HepG2 (cell line): ENCODE measurements at regions of chr9 and their contacts with region 1.

Region 1: DNA sequence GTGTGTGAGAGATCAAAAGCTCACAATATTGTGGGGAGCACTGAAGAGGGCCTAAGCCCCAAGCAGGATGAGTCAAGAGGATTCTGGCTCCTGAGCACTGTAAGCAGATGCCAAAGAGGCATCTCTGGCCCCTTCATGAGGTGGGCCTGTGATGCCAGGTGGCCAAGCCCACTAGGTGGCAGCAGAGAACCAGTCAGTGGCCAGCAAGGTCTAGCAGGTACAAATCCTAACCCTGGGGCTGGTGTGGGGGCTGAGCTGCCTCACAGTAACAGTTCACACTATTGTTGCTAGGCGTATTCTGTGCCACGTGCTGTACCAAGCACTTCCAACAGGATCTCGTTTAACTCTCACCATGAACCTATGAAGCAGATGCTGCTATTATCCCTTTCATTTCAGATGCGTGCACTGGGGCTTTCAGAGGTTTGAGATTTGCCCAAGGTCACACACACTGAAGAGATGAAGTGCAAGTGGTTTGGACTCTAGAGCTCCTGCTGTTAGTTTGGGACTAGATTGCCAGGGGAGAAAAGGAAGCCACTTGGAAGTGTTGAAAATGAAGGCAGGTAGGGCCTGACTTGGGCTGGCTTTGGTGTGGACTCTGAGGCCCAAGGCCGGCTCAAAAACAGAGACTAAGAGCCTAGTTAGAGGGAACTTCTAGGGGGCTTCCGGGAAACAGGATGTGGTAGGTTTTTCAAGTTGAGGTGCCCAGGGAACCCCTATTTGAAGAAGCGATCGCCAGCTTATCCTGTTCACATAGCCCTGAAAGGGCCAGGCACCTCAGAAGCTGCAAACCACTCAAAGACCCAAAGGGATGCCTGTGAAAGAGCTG is 4.4 kb upstream of the MLANA start:
- DNase-seq: peak; percentile 78
- ATAC-seq: peak; percentile 98
- H3K4me3 ChIP-seq: no peak overlapping the region
- H3K27ac ChIP-seq: peak overlapping the region; percentile 37
- H3K4me1 ChIP-seq: peaks cover 54% of the 10 kb centered on the region
- H3K27me3 ChIP-seq: no peaks in the 10 kb centered on the region
- CTCF ChIP-seq: peak; percentile 99
- EP300 ChIP-seq: no peak; a peak in 1 of 4 replicates
- POLR2A ChIP-seq: no peak
- RAD21 ChIP-seq: peak; percentile 98

Region 2: DNA sequence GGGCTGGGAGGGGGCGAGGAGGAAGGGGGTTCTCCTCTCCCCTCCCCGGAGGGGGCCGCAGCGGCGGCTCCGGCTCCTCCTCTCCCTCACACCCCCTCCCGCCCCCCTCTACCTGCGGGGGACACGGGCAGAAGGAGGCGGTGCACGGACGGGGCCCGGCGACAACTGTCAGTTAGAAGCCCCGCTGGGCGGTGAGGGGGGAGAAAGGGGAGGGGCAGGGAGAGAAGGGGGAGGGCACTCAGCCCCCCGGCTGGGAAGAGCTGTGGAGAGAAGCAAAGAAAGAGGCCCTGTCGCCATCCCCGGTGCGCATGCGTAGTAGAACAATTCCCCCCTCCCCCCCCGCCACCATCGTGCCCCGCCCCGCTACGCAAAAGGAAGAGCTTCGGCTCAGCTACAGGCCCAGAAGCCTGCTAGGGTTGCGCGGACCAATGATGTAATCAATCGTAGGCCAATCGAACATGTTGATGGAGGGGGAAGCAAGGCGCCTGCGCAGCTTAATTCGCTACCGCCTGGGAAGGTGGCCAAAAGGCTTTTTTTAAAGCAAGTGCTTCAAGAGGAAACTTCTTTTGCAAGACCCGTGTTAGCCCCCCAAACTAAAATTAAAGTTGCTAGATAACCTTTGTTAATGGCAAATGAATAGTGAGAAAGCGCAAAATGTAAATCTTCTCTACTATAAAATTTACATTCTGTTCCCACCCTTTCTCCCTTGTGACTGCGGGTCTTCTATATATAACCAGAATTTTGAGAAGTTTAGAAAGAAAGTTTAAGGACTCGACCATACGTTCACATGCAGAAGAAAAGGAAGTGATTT is 122.0 kb after region 1 on chr9:
- CTCF ChIA-PET with region 1: no interaction called
- POLR2A ChIA-PET with region 1: interaction called, 3 read pairs
- in situ Hi-C with region 1: no loop called
- intact Hi-C with region 1: loop called (anchors 5 kb)
- DNase-seq: peak; percentile 98
- ATAC-seq: peak; percentile 65
- H3K4me3 ChIP-seq: peak overlapping the region; percentile 83 to 96 (median 85)
- H3K27ac ChIP-seq: peak overlapping the region; percentile 83
- H3K4me1 ChIP-seq: peaks cover 57% of the 10 kb centered on the region
- H3K27me3 ChIP-seq: no peaks in the 10 kb centered on the region; a peak in 1 of 5 replicates
- CTCF ChIP-seq: no peak
- EP300 ChIP-seq: no peak
- POLR2A ChIP-seq: peak; percentile 52 to 62; a peak in 3 of 4 replicates
- RAD21 ChIP-seq: no peak

Region 3: DNA sequence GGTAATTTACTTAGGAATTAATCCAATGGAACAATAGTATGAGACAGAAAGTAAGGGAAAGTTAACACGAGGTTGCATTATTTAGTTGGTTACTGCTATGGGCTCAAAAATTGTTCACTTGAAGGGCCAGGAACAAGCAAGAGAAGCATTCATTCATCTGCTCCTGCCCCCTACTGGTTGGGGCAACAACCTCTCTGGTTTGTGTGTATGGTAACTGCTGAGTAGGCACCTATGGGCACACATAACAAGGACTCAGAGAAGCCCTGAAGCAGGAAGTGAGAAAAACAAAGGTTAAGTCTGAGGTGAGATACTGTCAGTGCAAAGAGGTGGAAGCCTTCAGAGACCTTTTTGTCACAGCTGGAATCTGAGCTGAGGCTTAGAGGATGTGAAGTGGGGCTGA is 163.5 kb after region 1 on chr9:
- CTCF ChIA-PET with region 1: interaction called, 34 read pairs
- POLR2A ChIA-PET with region 1: no interaction called
- in situ Hi-C with region 1: loop called (anchors 5 kb)
- intact Hi-C with region 1: loop called (anchors 1 kb)
- DNase-seq: peak; percentile 30
- ATAC-seq: peak; percentile 40
- H3K4me3 ChIP-seq: no peak overlapping the region
- H3K27ac ChIP-seq: no peak overlapping the region
- H3K4me1 ChIP-seq: peaks cover 7% of the 10 kb centered on the region; the same call in 1 of the 2 replicates
- H3K27me3 ChIP-seq: 0 out of 5 replicates have a peak, but pooled peaks cover 0 to 6% of the 10 kb centered on the region in 2 experiments
- CTCF ChIP-seq: peak; percentile 51
- EP300 ChIP-seq: no peak
- POLR2A ChIP-seq: no peak
- RAD21 ChIP-seq: no peak

Region 4: DNA sequence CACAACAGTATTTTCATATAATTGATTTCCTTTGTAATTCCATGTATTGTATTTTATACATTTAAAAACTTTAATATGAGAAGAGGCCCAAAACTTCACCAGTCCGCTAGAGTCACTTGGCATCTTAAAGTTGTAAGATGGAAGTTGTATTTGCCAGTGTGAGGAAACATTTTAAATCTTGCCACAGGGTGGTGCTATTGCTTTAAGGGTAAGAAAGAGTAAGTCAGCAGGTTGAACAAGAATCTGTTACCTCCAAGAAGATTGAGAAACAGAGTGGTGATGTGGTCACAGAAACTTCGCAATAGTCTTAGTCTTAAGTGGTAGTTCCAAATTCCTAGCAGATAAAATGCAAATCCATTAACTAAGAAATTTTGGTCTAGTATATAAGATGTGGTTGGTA is 168.9 kb after region 1 on chr9:
- CTCF ChIA-PET with region 1: interaction called, 34 read pairs
- POLR2A ChIA-PET with region 1: no interaction called
- in situ Hi-C with region 1: no loop called
- intact Hi-C with region 1: loop called (anchors 1 kb)
- DNase-seq: peak; percentile 66
- ATAC-seq: peak; percentile 61; the same call in 2 of the 3 replicates
- H3K4me3 ChIP-seq: no peak overlapping the region
- H3K27ac ChIP-seq: no peak overlapping the region
- H3K4me1 ChIP-seq: no peaks in the 10 kb centered on the region
- H3K27me3 ChIP-seq: no peaks in the 10 kb centered on the region
- CTCF ChIP-seq: peak; percentile 69
- EP300 ChIP-seq: no peak
- POLR2A ChIP-seq: no peak
- RAD21 ChIP-seq: peak; percentile 59

Region 5: DNA sequence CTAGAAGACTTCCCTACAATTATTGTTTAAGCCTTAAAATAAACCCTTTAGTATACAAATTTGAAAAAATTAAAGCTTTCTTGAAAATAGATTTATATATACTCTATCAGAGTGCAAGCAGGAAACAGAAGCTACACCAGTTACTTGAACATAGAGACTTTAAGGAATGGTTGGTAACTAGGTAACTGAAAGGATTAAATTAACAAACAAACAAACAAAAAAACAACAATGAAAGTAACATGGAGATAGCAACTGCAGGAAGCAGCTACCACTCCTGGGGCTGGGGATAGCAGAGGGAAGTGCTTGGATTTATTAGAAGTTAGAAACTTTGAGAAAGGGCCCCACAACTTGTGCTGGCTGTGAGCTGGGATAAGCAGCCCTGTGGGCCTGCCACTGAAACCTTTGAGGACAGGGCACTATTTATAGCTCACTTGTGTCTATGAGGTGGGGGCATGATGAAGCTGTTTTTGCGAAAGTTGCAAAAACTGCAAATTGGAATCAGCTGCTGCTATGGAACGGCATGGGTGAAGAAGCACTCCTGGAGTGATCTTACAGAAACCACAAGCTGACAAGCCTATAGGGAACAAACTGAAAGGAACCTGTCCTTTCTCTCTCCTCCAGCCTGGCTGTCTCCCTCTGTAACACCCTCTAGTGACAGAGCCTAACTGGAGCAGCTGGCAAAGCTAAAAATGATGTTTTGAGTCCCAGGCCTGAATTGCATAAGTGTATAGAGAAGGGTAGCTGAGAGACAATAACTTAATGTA is 220.4 kb after region 1 on chr9:
- CTCF ChIA-PET with region 1: interaction called, 3 read pairs
- POLR2A ChIA-PET with region 1: no interaction called
- in situ Hi-C with region 1: no loop called
- intact Hi-C with region 1: loop called (anchors 1 kb)
- DNase-seq: peak; percentile 25
- ATAC-seq: peak; percentile 94
- H3K4me3 ChIP-seq: no peak overlapping the region
- H3K27ac ChIP-seq: no peak overlapping the region
- H3K4me1 ChIP-seq: no peaks in the 10 kb centered on the region
- H3K27me3 ChIP-seq: 0 out of 5 replicates have a peak, but pooled peaks cover 0 to 3% of the 10 kb centered on the region in 2 experiments
- CTCF ChIP-seq: peak; percentile 46
- EP300 ChIP-seq: no peak
- POLR2A ChIP-seq: no peak
- RAD21 ChIP-seq: no peak

Region 6: GRCh38 chr9:6197330-6197729 is 311.0 kb after region 1 on chr9:
- CTCF ChIA-PET with region 1: no interaction called
- POLR2A ChIA-PET with region 1: no interaction called
- in situ Hi-C with region 1: no loop called
- intact Hi-C with region 1: loop called (anchors 1 kb)
- DNase-seq: peak; percentile 31
- ATAC-seq: peak; percentile 74
- H3K4me3 ChIP-seq: no peak overlapping the region
- H3K27ac ChIP-seq: no peak overlapping the region
- H3K4me1 ChIP-seq: no peaks in the 10 kb centered on the region
- H3K27me3 ChIP-seq: no peaks in the 10 kb centered on the region
- CTCF ChIP-seq: peak; percentile 70
- EP300 ChIP-seq: no peak
- POLR2A ChIP-seq: no peak
- RAD21 ChIP-seq: peak; percentile 22; the same call in 1 of the 2 replicates

Region 7: DNA sequence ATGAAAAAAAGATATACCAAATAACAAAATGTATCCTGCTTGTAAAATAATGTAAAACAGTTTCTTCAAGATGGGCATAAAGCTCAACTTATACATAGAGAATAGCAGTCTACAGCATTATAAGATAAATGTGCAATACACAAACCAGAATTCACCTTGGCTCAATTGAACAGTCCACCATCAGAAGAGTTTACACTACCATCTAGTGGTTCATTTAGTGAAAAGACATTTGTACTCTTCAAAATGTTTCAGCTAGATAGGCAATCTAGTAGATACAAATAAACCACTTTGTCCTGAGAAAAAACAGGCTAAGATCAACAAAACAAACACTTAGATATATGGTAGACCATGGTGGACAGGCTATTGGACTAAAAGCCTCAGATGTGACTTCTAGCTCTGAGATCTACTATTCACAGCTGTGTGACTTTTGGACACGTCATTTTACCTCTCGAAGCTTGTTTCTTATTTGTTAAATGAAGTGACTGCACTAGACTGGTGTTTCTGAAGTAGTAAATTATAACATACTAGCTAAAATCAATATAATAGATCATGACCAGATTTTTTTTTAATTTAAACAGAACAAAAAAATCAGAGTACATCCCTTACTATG is 419.7 kb after region 1 on chr9:
- CTCF ChIA-PET with region 1: interaction called, 4 read pairs
- POLR2A ChIA-PET with region 1: no interaction called
- in situ Hi-C with region 1: no loop called
- intact Hi-C with region 1: loop called (anchors 2 kb)
- DNase-seq: peak; percentile 42
- ATAC-seq: peak; percentile 77
- H3K4me3 ChIP-seq: no peak overlapping the region
- H3K27ac ChIP-seq: no peak overlapping the region
- H3K4me1 ChIP-seq: no peaks in the 10 kb centered on the region
- H3K27me3 ChIP-seq: no peaks in the 10 kb centered on the region
- CTCF ChIP-seq: peak; percentile 78
- EP300 ChIP-seq: no peak
- POLR2A ChIP-seq: no peak
- RAD21 ChIP-seq: peak; percentile 71